ENCODE measurements at regions of chr4 and their contacts with region 1.

Region 1: DNA sequence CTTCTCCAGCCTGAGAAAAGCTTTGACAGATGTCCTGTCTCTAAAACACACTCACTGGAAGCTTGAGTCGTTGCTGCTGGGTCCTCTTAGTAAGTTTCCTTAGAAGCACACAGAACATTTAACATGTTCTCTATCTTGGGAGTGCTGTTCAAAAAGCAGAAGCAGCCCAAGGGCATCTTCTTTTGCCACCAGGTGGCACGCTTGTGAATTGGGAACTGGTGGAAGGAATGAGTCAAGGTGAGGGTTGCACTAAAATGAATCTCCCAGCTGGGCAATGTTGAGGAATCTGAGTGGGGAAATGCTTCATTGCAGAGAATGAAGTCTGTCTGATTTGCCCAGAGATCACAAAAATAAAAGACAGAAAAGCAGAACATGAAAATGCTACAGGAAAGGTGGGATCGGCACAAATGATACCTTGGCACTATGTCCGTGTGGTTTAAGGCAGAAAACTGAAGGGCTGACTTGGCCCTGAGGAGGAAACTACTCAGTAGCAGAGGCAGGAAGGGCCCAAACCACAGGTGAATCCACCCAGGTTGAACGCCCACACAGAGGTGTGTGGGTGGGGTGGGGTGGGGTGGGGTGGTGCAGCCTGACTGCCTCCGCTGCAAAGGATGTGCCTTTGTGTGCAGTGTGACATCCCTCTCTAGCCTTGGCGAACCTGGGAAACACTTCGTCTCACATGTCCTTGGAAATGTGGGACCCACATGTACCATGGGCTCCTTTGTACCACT is 26.0 kb downstream of the KIT start:
- H3K4me3 Mint-ChIP-seq: no peak overlapping the region
- H3K27ac Mint-ChIP-seq: no peak overlapping the region
- H3K4me1 Mint-ChIP-seq: peaks cover 21% of the 10 kb centered on the region
- H3K27me3 Mint-ChIP-seq: peaks cover 4% of the 10 kb centered on the region

Region 2: GRCh38 chr4:54414545-54414944 is 269.2 kb before region 1 on chr4:
- intact Hi-C with region 1: no loop called
- H3K4me3 Mint-ChIP-seq: no peak overlapping the region
- H3K27ac Mint-ChIP-seq: no peak overlapping the region
- H3K4me1 Mint-ChIP-seq: no peaks in the 10 kb centered on the region
- H3K27me3 Mint-ChIP-seq: no peaks in the 10 kb centered on the region

Region 3: DNA sequence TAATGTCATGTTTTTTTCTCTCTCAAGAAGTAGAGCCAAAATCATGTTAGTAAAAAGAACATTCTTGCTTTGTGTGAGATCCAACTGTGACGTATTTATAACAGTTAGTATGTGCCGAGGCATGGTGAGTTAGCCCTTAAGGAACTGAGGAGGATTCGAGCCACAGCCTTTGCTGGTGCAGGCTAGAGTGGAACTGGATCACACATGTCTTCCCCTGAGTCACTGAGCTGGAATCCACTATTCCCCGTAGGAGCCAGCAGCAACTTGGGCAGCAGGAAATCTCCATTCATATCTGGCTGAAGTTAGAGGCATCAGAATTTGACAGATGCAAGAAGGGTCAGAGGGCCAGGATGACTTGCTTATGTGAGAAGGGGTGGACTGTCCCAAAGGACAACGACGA is 170.6 kb before region 1 on chr4:
- intact Hi-C with region 1: no loop called
- H3K4me3 Mint-ChIP-seq: no peak overlapping the region
- H3K27ac Mint-ChIP-seq: no peak overlapping the region
- H3K4me1 Mint-ChIP-seq: no peaks in the 10 kb centered on the region
- H3K27me3 Mint-ChIP-seq: no peaks in the 10 kb centered on the region

Region 4: GRCh38 chr4:54840992-54841768 is 157.4 kb after region 1 on chr4:
- intact Hi-C with region 1: loop called (anchors 2 kb)
- H3K4me3 Mint-ChIP-seq: no peak overlapping the region
- H3K27ac Mint-ChIP-seq: no peak overlapping the region
- H3K4me1 Mint-ChIP-seq: peaks cover 6% of the 10 kb centered on the region
- H3K27me3 Mint-ChIP-seq: no peaks in the 10 kb centered on the region

Region 5: DNA sequence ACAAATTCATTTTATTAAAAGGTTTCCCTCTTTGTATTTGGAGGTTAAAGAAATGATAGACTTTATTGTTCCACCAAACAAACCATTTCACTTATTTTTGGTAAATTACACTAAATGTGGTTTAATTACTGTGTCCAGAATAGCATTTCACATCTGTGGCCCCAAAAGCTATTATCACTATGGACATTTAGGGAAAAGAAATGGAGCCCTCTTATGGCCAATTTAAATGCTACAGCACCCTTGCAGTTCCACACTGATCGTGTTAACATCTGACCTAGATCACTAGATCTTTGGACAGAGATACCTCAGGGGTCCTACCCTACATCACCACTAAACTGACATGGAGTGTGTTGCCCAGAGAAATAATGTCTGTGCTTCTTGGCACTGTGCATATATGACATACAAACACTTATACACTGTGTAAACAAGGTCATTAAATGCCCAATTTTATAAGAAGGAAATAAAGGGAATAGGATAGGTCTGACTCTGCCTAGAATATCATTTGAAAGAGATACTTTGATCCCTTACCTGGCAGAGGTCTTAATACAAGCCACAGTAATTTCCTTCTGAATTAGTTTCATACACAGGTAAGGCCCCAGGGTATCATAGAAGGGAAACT is 277.7 kb after region 1 on chr4:
- intact Hi-C with region 1: loop called (anchors 1 kb)
- H3K4me3 Mint-ChIP-seq: no peak overlapping the region
- H3K27ac Mint-ChIP-seq: no peak overlapping the region
- H3K4me1 Mint-ChIP-seq: no peaks in the 10 kb centered on the region
- H3K27me3 Mint-ChIP-seq: no peaks in the 10 kb centered on the region

Region 6: GRCh38 chr4:55321707-55322264 is 638.0 kb after region 1 on chr4:
- intact Hi-C with region 1: loop called (anchors 2 kb)
- H3K4me3 Mint-ChIP-seq: no peak overlapping the region
- H3K27ac Mint-ChIP-seq: no peak overlapping the region
- H3K4me1 Mint-ChIP-seq: peaks cover 6% of the 10 kb centered on the region
- H3K27me3 Mint-ChIP-seq: peaks cover 11% of the 10 kb centered on the region